ENCODE measurements at regions of chr6 and their contacts with region 1.

Region 1: GRCh38 chr6:118843685-118844390 is 50.1 kb upstream of the ASF1A start:
- DNase-seq: peak; percentile 11
- H3K4me3 Mint-ChIP-seq: peak overlapping the region; percentile 34
- H3K27ac Mint-ChIP-seq: peak overlapping the region; percentile 19
- H3K4me1 Mint-ChIP-seq: peaks cover 27% of the 10 kb centered on the region
- H3K27me3 Mint-ChIP-seq: no peaks in the 10 kb centered on the region

Region 2: GRCh38 chr6:118632359-118632758 is 211.5 kb before region 1 on chr6:
- intact Hi-C with region 1: no loop called
- DNase-seq: no peak
- H3K4me3 Mint-ChIP-seq: no peak overlapping the region
- H3K27ac Mint-ChIP-seq: no peak overlapping the region
- H3K4me1 Mint-ChIP-seq: peaks cover 35% of the 10 kb centered on the region
- H3K27me3 Mint-ChIP-seq: no peaks in the 10 kb centered on the region

Region 3: GRCh38 chr6:118680452-118681095 is 163.3 kb before region 1 on chr6:
- intact Hi-C with region 1: loop called (anchors 2 kb)
- DNase-seq: peak; percentile 20
- H3K4me3 Mint-ChIP-seq: peak overlapping the region; percentile 9
- H3K27ac Mint-ChIP-seq: peak overlapping the region; percentile 57
- H3K4me1 Mint-ChIP-seq: peaks cover 69% of the 10 kb centered on the region
- H3K27me3 Mint-ChIP-seq: no peaks in the 10 kb centered on the region

Region 4: GRCh38 chr6:118724211-118724610 is 119.6 kb before region 1 on chr6:
- intact Hi-C with region 1: loop called (anchors 1 kb)
- DNase-seq: no peak
- H3K4me3 Mint-ChIP-seq: peak overlapping the region; percentile 46
- H3K27ac Mint-ChIP-seq: peak overlapping the region; percentile 40
- H3K4me1 Mint-ChIP-seq: peaks cover 56% of the 10 kb centered on the region
- H3K27me3 Mint-ChIP-seq: peaks cover 2% of the 10 kb centered on the region

Region 5: DNA sequence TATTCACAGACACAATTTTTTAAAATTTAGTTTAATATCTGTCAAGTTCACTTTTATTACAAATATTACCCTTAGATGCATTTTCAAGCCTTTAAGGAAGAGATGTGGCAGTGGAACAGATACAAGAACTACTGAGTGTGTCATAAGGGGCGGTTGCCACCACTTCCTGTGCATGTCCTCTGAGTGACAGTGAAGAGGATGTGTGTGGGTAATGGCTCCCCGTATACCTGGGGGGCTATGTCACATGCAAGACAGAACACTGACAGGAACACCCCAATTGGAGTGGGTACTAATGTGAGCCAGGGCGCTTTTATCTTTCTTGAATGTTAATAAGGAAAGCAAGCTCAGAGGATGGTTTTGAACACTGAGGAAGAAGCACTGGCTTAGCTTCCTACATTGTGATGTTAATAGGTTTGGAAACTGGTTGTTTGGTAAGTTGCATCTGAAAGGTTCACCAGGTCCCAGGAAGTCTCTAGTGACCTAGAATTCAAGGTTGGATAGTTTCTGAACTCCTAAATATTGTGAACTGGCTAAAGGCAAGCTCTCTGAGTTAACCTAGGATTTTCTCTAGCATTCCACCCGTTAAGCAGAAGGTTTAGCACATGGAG is 33.3 kb before region 1 on chr6:
- intact Hi-C with region 1: loop called (anchors 1 kb)
- DNase-seq: peak; percentile 46
- H3K4me3 Mint-ChIP-seq: peak overlapping the region; percentile 46
- H3K27ac Mint-ChIP-seq: peak overlapping the region; percentile 87
- H3K4me1 Mint-ChIP-seq: peaks cover 55% of the 10 kb centered on the region
- H3K27me3 Mint-ChIP-seq: no peaks in the 10 kb centered on the region

Region 6: GRCh38 chr6:119078376-119079282 is 234.8 kb after region 1 on chr6 and contains the start of gene FAM184A:
- intact Hi-C with region 1: loop called (anchors 1 kb)
- DNase-seq: peak; percentile 73
- H3K4me3 Mint-ChIP-seq: peak within 1 kb of the TSS; percentile 92
- H3K27ac Mint-ChIP-seq: peak within 1 kb of the TSS; percentile 91
- H3K4me1 Mint-ChIP-seq: peaks cover 43% of the 10 kb centered on the region
- H3K27me3 Mint-ChIP-seq: peaks cover 8% of the 10 kb centered on the region
- total RNA-seq, gene FAM184A: 9.0 and 9.4 TPM in 2 replicates